ENCODE measurements at regions of chr17 and their contacts with region 1.

Region 1: DNA sequence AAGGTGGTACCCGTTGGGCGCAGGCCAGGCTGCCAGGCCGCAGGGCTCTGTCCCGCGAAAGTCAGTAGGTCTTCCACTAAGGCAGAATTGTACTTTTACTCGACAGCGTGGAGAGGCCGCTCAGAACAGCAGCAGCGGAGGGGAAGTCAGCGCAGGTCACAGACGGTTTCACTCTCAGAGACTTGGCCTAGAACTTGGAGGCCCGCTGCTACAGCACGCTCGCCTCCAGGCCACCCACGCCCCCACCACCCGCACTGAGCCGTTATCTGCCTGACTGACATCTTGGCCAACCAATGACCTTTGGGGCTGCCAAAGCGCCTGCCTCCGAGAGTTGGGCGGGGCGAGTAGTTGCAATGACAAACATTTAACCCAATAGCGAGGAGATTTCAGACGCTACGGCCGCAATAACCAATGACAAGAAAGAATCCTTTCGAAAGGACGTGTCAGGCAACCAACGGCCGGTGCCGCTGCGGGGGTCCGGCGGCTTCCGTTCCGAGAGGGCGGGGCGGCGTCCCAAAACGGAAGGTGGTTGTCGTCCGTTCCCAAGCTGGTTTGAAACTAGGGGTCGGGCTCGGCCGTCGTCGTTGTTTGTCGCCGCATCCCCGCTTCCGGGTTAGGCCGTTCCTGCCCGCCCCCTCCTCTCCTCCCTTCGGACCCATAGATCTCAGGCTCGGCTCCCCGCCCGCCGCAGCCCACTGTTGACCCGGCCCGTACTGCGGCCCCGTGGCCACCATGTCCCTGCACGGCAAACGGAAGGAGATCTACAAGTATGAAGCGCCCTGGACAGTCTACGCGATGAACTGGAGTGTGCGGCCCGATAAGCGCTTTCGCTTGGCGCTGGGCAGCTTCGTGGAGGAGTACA is at the start of gene DCAF7:
- DNase-seq: peak; percentile 93 to 99 (median 99)
- ATAC-seq: peak; percentile 97
- H3K4me3 ChIP-seq: peak within 1 kb of the TSS; percentile 93
- H3K4me3 Mint-ChIP-seq: peak within 1 kb of the TSS; percentile 85 to 99 (median 98)
- H3K27ac ChIP-seq: peak within 1 kb of the TSS; percentile 90
- H3K27ac Mint-ChIP-seq: peak within 1 kb of the TSS; percentile 94 to 97 (median 96)
- H3K4me1 ChIP-seq: peaks cover 18 to 27% of the 10 kb centered on the region in 2 donors
- H3K4me1 Mint-ChIP-seq: peaks cover 32 to 50% (median 41%) of the 10 kb centered on the region in 7 donors
- H3K27me3 ChIP-seq: no peaks in the 10 kb centered on the region
- H3K27me3 Mint-ChIP-seq: peaks cover 0 to 2% (median 0%) of the 10 kb centered on the region in 5 donors
- total RNA-seq, gene DCAF7: 26.0 to 128 (median 70.0) TPM

Region 2: DNA sequence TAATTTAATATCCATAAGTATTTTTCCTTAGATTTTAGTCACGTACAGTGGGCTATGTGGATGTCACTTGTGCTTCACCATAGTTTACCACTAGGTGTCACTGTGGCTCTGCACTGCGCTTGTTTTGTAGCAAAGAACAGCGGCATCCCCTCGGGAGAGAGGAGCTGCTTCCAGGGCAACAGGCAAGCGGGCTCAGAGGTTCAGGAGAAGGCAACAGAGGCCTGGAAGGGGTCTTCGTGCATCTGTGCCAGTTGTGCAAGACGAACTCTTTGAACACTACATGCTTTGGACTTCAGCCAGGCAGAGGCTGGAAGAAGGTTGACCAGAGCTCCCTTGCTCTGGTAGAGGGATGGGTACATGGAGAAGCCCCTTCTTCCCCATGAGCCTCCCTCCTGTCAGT is 124.7 kb before region 1 on chr17:
- CTCF ChIA-PET with region 1: interaction called, 4 read pairs
- POLR2A ChIA-PET with region 1: no interaction called
- intact Hi-C with region 1: loop called (anchors 1 to 5 kb)
- DNase-seq: peak; percentile 31 to 74 (median 62)
- ATAC-seq: peak; percentile 91
- H3K4me3 ChIP-seq: no peak overlapping the region
- H3K4me3 Mint-ChIP-seq: peak overlapping the region in 4 of 10 donors; percentile 19 to 67 (median 32)
- H3K27ac ChIP-seq: no peak overlapping the region
- H3K27ac Mint-ChIP-seq: peak overlapping the region in 1 of 9 donors; percentile 41
- H3K4me1 ChIP-seq: peaks cover 22 to 26% of the 10 kb centered on the region in 2 donors
- H3K4me1 Mint-ChIP-seq: peaks cover 20 to 39% (median 28%) of the 10 kb centered on the region in 7 donors
- H3K27me3 ChIP-seq: no peaks in the 10 kb centered on the region
- H3K27me3 Mint-ChIP-seq: peaks cover 0 to 22% (median 0%) of the 10 kb centered on the region in 5 donors

Region 3: GRCh38 chr17:63523253-63523855 is 26.8 kb before region 1 on chr17 and contains the start of gene KCNH6:
- CTCF ChIA-PET with region 1: no interaction called
- POLR2A ChIA-PET with region 1: no interaction called
- intact Hi-C with region 1: loop called (anchors 1 kb)
- DNase-seq: peak in 1 of 9 donors; percentile 30
- ATAC-seq: no peak
- H3K4me3 ChIP-seq: no peak within 1 kb of the TSS
- H3K4me3 Mint-ChIP-seq: peak within 1 kb of the TSS in 5 of 10 donors; percentile 13 to 57 (median 17)
- H3K27ac ChIP-seq: no peak within 1 kb of the TSS
- H3K27ac Mint-ChIP-seq: peak within 1 kb of the TSS in 2 of 9 donors; percentile 25 to 73
- H3K4me1 ChIP-seq: no peaks in the 10 kb centered on the region
- H3K4me1 Mint-ChIP-seq: peaks cover 0 to 8% (median 5%) of the 10 kb centered on the region in 7 donors
- H3K27me3 ChIP-seq: peaks cover 0 to 3% of the 10 kb centered on the region in 2 donors
- H3K27me3 Mint-ChIP-seq: peaks cover 23 to 33% (median 29%) of the 10 kb centered on the region in 5 donors
- total RNA-seq, gene KCNH6: not detected

Region 4: GRCh38 chr17:63621766-63622519 is 71.8 kb after region 1 on chr17 and contains the start of gene MAP3K3:
- CTCF ChIA-PET with region 1: no interaction called
- POLR2A ChIA-PET with region 1: no interaction called
- intact Hi-C with region 1: loop called (anchors 1 kb)
- DNase-seq: peak; percentile 79 to 99 (median 98)
- ATAC-seq: peak; percentile 93
- H3K4me3 ChIP-seq: peak within 1 kb of the TSS; percentile 82
- H3K4me3 Mint-ChIP-seq: peak within 1 kb of the TSS; percentile 96 to 100 (median 99)
- H3K27ac ChIP-seq: peak within 1 kb of the TSS; percentile 75
- H3K27ac Mint-ChIP-seq: peak within 1 kb of the TSS; percentile 83 to 97 (median 95)
- H3K4me1 ChIP-seq: peaks cover 21 to 31% of the 10 kb centered on the region in 2 donors
- H3K4me1 Mint-ChIP-seq: peaks cover 34 to 48% (median 42%) of the 10 kb centered on the region in 7 donors
- H3K27me3 ChIP-seq: peaks cover 0 to 3% of the 10 kb centered on the region in 2 donors
- H3K27me3 Mint-ChIP-seq: peaks cover 0 to 12% (median 0%) of the 10 kb centered on the region in 5 donors
- total RNA-seq, gene MAP3K3: 37.5 to 105 (median 85.5) TPM

Region 5: GRCh38 chr17:63827002-63827771 is 277.0 kb after region 1 on chr17 and contains the starts of genes FTSJ3 and PSMC5:
- CTCF ChIA-PET with region 1: no interaction called
- POLR2A ChIA-PET with region 1: no interaction called
- intact Hi-C with region 1: loop called in 1 of 2 experiments (anchors 2 kb)
- DNase-seq: peak; percentile 89 to 98 (median 96)
- ATAC-seq: peak; percentile 97
- H3K4me3 ChIP-seq: peak within 1 kb of the TSS; percentile 89
- H3K4me3 Mint-ChIP-seq: peak within 1 kb of the TSS; percentile 93 to 100 (median 98)
- H3K27ac ChIP-seq: peak within 1 kb of the TSS; percentile 87
- H3K27ac Mint-ChIP-seq: peak within 1 kb of the TSS; percentile 98 to 100 (median 99)
- H3K4me1 ChIP-seq: peaks cover 27 to 46% of the 10 kb centered on the region in 2 donors
- H3K4me1 Mint-ChIP-seq: peaks cover 43 to 82% (median 77%) of the 10 kb centered on the region in 7 donors
- H3K27me3 ChIP-seq: no peaks in the 10 kb centered on the region
- H3K27me3 Mint-ChIP-seq: no peaks in the 10 kb centered on the region
- total RNA-seq, gene FTSJ3: 38.1 to 66.2 (median 55.8) TPM
- total RNA-seq, gene PSMC5: 68.4 to 153 (median 105) TPM

Region 6: GRCh38 chr17:63974594-63975192 is 424.5 kb after region 1 on chr17:
- CTCF ChIA-PET with region 1: no interaction called
- POLR2A ChIA-PET with region 1: no interaction called
- intact Hi-C with region 1: no loop called
- DNase-seq: no peak
- ATAC-seq: no peak
- H3K4me3 ChIP-seq: no peak overlapping the region
- H3K4me3 Mint-ChIP-seq: peak overlapping the region in 1 of 10 donors; percentile 56
- H3K27ac ChIP-seq: no peak overlapping the region
- H3K27ac Mint-ChIP-seq: peak overlapping the region in 1 of 9 donors; percentile 25
- H3K4me1 ChIP-seq: no peaks in the 10 kb centered on the region
- H3K4me1 Mint-ChIP-seq: peaks cover 0 to 17% (median 5%) of the 10 kb centered on the region in 7 donors
- H3K27me3 ChIP-seq: no peaks in the 10 kb centered on the region
- H3K27me3 Mint-ChIP-seq: peaks cover 0 to 23% (median 0%) of the 10 kb centered on the region in 5 donors

Region 7: DNA sequence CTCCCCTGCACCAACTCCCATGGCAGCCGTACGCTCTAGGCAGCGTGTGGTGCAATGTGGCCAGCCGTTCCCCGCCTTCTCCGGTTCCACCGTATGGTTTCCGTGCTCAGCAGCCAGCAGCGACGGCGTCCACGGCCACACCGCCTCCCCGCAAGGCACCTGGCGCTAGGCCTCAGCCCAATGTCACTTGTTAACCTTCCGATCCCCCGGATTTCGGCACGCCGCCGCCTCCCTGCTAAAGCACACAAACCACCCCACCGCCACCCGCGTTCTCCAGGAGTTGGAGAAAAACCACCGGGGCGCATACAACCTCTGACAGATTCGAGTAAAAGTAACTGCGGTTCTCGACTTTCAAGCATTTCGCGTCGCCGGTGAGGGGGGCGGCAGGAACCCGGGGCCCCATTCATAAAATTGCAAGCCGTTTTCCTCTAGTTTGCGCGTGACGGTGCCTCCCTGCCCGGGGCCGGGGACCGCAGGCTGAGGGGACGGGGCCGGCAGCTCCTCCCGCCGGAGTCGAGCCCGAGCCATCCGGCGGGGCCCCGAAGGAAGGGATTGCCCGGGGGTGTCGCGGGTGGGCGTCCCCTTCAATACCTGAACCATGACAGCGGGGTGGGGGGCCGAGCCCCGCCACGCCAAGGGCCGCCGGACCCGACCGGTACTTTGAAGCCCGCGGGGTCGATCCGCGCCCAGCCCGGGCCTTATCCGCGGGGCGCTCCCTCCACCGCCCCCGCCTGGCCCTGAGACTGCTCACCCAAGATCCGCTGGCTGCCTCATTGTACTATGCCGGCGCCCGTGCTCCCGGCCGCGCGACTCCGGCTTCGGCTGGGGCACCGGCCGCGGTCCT is 712.5 kb after region 1 on chr17 and contains the start of gene TEX2:
- CTCF ChIA-PET with region 1: no interaction called
- POLR2A ChIA-PET with region 1: no interaction called
- intact Hi-C with region 1: loop called in 1 of 2 experiments (anchors 5 kb)
- DNase-seq: peak; percentile 44 to 82 (median 74)
- ATAC-seq: peak; percentile 56
- H3K4me3 ChIP-seq: peak within 1 kb of the TSS; percentile 99
- H3K4me3 Mint-ChIP-seq: peak within 1 kb of the TSS; percentile 87 to 98 (median 94)
- H3K27ac ChIP-seq: peak within 1 kb of the TSS; percentile 90
- H3K27ac Mint-ChIP-seq: peak within 1 kb of the TSS; percentile 87 to 98 (median 93)
- H3K4me1 ChIP-seq: peaks cover 18% of the 10 kb centered on the region in 2 donors
- H3K4me1 Mint-ChIP-seq: peaks cover 22 to 50% (median 42%) of the 10 kb centered on the region in 7 donors
- H3K27me3 ChIP-seq: no peaks in the 10 kb centered on the region
- H3K27me3 Mint-ChIP-seq: peaks cover 0 to 11% (median 5%) of the 10 kb centered on the region in 5 donors
- total RNA-seq, gene TEX2: 14.1 to 24.2 (median 14.4) TPM